B cell (primary cell): ENCODE measurements at regions of chr22 and their contacts with region 1.

Region 1: GRCh38 chr22:44735540-44736488 is 16.6 kb upstream of the ARHGAP8 start:
- DNase-seq: peak; percentile 83
- ATAC-seq: peak; percentile 86
- H3K4me3 ChIP-seq: no peak overlapping the region
- H3K4me3 Mint-ChIP-seq: no peak overlapping the region
- H3K27ac ChIP-seq: no peak overlapping the region
- H3K27ac Mint-ChIP-seq: no peak overlapping the region
- H3K4me1 ChIP-seq: peaks cover 0 to 3% of the 10 kb centered on the region in 2 donors
- H3K4me1 Mint-ChIP-seq: no peaks in the 10 kb centered on the region
- H3K27me3 ChIP-seq: no peaks in the 10 kb centered on the region
- H3K27me3 Mint-ChIP-seq: no peaks in the 10 kb centered on the region
- CTCF ChIP-seq: peak; percentile 96

Region 2: DNA sequence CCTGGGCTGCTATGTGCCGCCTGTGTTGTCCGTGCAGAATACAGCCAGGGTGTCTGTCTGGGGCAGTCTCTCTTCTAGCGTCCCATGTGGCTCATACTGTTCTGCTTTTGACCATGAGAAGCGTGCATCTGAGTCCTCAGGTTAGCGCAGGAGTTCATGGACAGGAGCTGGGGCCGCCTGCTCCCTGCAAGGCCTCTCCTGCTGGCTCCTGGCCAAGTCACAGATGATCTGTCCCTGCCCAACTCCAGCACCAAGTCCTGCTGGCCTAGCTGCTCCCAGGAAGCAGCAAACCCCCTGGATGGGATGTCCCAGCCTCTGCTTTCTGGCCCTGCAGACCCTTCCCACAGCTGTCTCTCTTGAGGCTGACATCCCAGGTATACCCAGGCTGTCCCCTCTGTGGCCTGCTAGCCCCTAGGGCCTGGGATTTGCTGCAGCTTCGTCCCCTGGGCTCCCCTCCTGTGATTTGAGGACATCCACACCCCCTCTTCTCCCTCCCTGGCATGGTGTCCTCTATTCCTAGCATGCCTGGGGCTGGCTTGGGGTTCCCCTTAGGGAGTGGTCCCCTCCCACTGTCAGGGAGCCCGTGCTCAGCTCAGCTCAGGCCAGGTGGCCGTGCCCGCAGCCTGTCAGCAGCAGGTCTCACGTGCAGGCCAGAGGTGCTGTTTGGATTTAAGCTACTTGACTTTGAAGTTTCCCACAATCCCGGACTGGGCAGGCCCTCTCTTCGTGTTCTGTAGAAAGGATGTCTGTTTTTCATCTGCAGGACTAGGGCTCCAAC is 16.0 kb before region 1 on chr22:
- CTCF ChIA-PET with region 1: interaction called, 11 read pairs
- POLR2A ChIA-PET with region 1: interaction called, 3 read pairs
- intact Hi-C with region 1: no loop called
- DNase-seq: no peak
- ATAC-seq: no peak
- H3K4me3 ChIP-seq: no peak overlapping the region
- H3K4me3 Mint-ChIP-seq: no peak overlapping the region
- H3K27ac ChIP-seq: no peak overlapping the region
- H3K27ac Mint-ChIP-seq: no peak overlapping the region
- H3K4me1 ChIP-seq: peaks cover 0 to 15% of the 10 kb centered on the region in 2 donors
- H3K4me1 Mint-ChIP-seq: peaks cover 14% of the 10 kb centered on the region
- H3K27me3 ChIP-seq: no peaks in the 10 kb centered on the region
- H3K27me3 Mint-ChIP-seq: no peaks in the 10 kb centered on the region
- CTCF ChIP-seq: no peak

Region 3: DNA sequence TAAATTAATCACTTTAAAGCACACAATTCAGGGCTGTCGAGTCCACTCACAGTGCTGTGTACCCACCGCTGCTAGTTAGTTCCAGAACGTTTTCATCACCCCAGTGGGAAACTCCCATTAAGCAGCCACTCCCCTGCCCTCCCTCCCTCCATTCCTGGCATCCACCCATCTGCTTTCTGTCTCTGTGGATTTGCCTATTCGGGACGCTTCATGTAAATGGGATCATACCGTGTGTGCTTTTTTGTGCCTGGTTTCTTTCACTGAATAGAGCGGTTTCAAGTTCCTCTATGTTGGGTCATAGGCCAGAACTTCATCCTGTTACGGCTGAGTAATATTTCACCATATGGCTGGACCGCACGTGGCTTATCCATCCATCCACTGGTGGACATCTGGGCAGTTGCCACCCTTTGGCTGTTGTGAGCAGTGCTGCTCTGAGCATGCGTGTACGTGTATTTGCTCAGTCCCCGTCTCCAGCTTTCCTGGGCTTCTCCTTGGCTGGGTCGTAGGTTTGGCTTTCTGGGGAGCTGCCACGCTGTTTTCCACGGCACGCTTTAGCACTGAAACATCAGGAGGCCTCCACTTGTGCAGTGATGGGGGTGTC is 46.6 kb after region 1 on chr22:
- CTCF ChIA-PET with region 1: no interaction called
- POLR2A ChIA-PET with region 1: no interaction called
- intact Hi-C with region 1: no loop called
- DNase-seq: no peak
- ATAC-seq: no peak
- H3K4me3 ChIP-seq: no peak overlapping the region
- H3K4me3 Mint-ChIP-seq: no peak overlapping the region
- H3K27ac ChIP-seq: no peak overlapping the region
- H3K27ac Mint-ChIP-seq: no peak overlapping the region
- H3K4me1 ChIP-seq: no peaks in the 10 kb centered on the region
- H3K4me1 Mint-ChIP-seq: no peaks in the 10 kb centered on the region
- H3K27me3 ChIP-seq: no peaks in the 10 kb centered on the region
- H3K27me3 Mint-ChIP-seq: peaks cover 15% of the 10 kb centered on the region
- CTCF ChIP-seq: no peak

Region 4: GRCh38 chr22:45033136-45033535 is 297.3 kb after region 1 on chr22:
- CTCF ChIA-PET with region 1: no interaction called
- POLR2A ChIA-PET with region 1: no interaction called
- intact Hi-C with region 1: no loop called
- DNase-seq: no peak
- ATAC-seq: no peak
- H3K4me3 ChIP-seq: no peak overlapping the region
- H3K4me3 Mint-ChIP-seq: no peak overlapping the region
- H3K27ac ChIP-seq: no peak overlapping the region
- H3K27ac Mint-ChIP-seq: no peak overlapping the region
- H3K4me1 ChIP-seq: no peaks in the 10 kb centered on the region
- H3K4me1 Mint-ChIP-seq: no peaks in the 10 kb centered on the region
- H3K27me3 ChIP-seq: no peaks in the 10 kb centered on the region
- H3K27me3 Mint-ChIP-seq: peaks cover 14% of the 10 kb centered on the region
- CTCF ChIP-seq: no peak